ENCODE measurements at regions of chr2 and their contacts with region 1.

Region 1: GRCh38 chr2:32772638-32773447 is 145.0 kb downstream of the TTC27 start:
- DNase-seq: peak; percentile 43 to 62
- ATAC-seq: peak; percentile 87 to 93
- H3K4me3 ChIP-seq: no peak overlapping the region
- H3K27ac ChIP-seq: peak overlapping the region in 1 of 2 experiments; percentile 13; a peak in 1 of 6 replicates
- H3K4me1 ChIP-seq: no peaks in the 10 kb centered on the region
- CTCF ChIP-seq: peak; percentile 99
- EP300 ChIP-seq: no peak
- POLR2A ChIP-seq: no peak
- RAD21 ChIP-seq: peak; percentile 98 to 99

Region 2: GRCh38 chr2:32760628-32761027 is 12.2 kb before region 1 on chr2:
- CTCF ChIA-PET with region 1: interaction called, 19 read pairs
- POLR2A ChIA-PET with region 1: no interaction called
- DNase-seq: no peak
- ATAC-seq: no peak
- H3K4me3 ChIP-seq: no peak overlapping the region
- H3K27ac ChIP-seq: no peak overlapping the region
- H3K4me1 ChIP-seq: no peaks in the 10 kb centered on the region
- CTCF ChIP-seq: no peak
- EP300 ChIP-seq: no peak
- POLR2A ChIP-seq: no peak
- RAD21 ChIP-seq: no peak

Region 3: DNA sequence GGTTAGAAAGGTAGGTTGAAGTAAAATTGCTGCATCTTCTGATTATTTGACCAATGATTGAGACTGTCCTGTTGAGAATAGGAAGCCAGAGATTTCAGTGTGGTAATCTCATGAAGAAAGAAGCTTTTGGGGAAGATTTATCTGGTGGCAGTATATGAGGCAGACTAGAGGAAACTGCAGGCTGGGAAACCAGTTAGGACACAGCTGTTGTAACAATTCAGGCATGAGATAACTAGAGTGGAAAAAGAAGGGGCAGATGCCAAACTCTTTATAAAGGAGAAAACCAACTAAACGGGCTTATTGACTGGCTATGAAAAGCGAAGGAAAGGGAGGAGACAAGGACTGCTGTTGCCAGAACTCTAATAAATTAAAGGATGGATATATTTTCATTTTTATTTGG is 10.6 kb after region 1 on chr2:
- CTCF ChIA-PET with region 1: interaction called, 16 read pairs
- POLR2A ChIA-PET with region 1: no interaction called
- DNase-seq: no peak
- ATAC-seq: no peak
- H3K4me3 ChIP-seq: no peak overlapping the region
- H3K27ac ChIP-seq: no peak overlapping the region
- H3K4me1 ChIP-seq: no peaks in the 10 kb centered on the region
- CTCF ChIP-seq: no peak
- EP300 ChIP-seq: no peak
- POLR2A ChIP-seq: no peak
- RAD21 ChIP-seq: no peak

Region 4: DNA sequence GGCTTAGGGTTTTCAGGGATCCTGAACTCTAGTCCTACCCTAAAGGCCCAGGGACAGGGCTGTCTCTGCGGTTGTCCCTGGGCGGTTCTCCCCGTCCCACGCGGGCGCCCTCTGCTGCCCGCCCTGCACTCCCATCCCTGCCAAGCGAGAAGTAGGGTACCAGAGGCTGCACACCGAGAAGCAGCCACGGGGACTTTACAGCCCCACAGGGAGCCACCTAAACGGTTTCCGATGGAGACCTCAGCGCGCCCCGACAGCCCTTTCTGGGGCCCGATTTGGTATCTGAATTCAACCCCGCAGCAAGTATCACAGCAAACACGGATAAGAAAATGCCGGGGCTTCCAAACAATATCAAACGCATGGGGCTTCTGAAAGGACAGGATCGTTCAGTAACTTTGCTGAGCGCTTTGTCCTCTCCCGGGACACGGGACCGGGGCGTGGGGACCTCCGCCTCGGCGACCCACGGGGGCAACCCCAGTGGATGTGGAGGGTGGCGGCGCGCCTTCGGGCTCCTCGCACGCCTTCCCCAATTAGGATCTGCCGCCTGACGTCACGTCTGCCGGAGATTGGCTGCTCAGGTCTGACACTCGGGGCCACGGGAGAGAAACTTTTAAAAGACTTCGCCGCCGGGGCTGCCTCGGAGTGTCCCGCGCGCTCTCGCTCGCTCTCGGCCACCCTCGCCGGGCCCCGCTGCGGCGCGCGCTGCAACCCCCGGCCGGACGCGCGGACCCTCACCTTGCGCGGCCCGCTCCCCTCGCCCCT is 173.7 kb after region 1 on chr2 and contains the start of gene LTBP1:
- CTCF ChIA-PET with region 1: interaction called, 16 read pairs
- POLR2A ChIA-PET with region 1: no interaction called
- DNase-seq: peak; percentile 83 to 91
- ATAC-seq: peak; percentile 82 to 95
- H3K4me3 ChIP-seq: peak within 1 kb of the TSS; percentile 96
- H3K27ac ChIP-seq: peak within 1 kb of the TSS; percentile 94 to 96
- H3K4me1 ChIP-seq: peaks cover 19% of the 10 kb centered on the region
- CTCF ChIP-seq: peak; percentile 95
- EP300 ChIP-seq: no peak
- POLR2A ChIP-seq: peak; percentile 56
- RAD21 ChIP-seq: peak; percentile 81 to 88
- polyA plus RNA-seq, gene LTBP1: 30.4 and 42.5 TPM in 2 replicates

Region 5: DNA sequence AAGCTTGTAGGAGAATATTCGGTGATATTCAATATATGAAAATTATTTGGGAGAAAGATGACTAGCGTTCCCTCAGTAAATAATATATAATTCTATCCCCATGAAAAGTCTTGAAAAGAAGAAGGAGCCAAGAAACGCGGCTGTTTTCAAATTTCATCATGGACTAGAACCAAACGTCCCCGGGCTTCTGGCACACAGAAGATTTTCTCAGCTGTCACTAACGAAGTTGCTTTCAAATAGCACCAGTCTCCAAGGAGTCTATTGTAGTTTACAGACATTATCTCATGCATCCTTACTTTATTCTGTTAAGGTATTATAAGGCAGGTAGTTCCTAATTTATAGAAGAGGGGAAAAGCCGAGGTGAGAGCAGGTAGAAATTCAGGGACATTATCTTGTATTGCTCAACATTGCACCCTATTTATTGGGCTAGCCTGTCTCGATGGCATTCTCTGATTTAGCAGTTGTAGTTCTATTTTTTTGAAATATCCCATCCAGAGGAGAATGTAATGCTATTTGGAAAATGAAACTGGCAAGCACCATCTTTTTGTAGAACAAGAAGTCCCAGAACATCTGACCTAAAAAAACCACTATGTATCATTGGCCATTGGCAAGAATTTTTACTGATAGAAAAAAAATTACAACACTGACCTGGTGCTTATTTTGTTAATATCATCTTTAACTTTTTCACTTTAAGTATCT is 505.6 kb after region 1 on chr2:
- CTCF ChIA-PET with region 1: no interaction called
- POLR2A ChIA-PET with region 1: no interaction called
- DNase-seq: no peak
- ATAC-seq: no peak
- H3K4me3 ChIP-seq: no peak overlapping the region
- H3K27ac ChIP-seq: no peak overlapping the region; a peak in 1 of 6 replicates
- H3K4me1 ChIP-seq: peaks cover 35% of the 10 kb centered on the region
- CTCF ChIP-seq: no peak
- EP300 ChIP-seq: no peak
- POLR2A ChIP-seq: no peak
- RAD21 ChIP-seq: no peak